WTC11 (cell line): ENCODE measurements at regions of chr11 and their contacts with region 1.

Region 1: GRCh38 chr11:12496171-12497025 is 119.0 kb downstream of the PARVA start:
- DNase-seq: no peak
- ATAC-seq: peak; percentile 34; the same call in 1 of the 2 replicates
- H3K4me3 Mint-ChIP-seq: no peak overlapping the region
- H3K27ac Mint-ChIP-seq: no peak overlapping the region
- H3K4me1 Mint-ChIP-seq: peaks cover 23% of the 10 kb centered on the region
- H3K27me3 Mint-ChIP-seq: peaks cover 28% of the 10 kb centered on the region
- CTCF ChIP-seq: no peak

Region 2: DNA sequence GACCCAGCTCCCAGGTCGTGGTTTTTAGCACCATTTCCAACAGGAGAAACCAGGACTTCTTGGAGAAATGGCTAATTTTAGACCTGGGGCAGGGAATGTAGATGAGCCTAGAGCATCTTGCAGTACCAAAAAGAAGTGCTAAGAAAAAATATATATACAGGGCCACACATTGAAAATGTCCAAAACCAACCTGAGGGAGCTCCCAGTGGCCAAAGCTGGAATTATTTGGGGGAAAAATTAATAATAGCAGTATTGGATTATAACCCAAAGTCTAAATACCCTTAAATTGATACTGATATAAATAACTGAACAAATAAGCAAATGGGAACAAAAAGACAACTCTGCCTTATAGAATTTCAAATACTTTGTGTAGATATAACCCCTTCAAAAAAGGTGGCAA is 11.1 kb before region 1 on chr11:
- CTCF ChIA-PET with region 1: interaction called, 25 read pairs
- POLR2A ChIA-PET with region 1: interaction called, 3 read pairs
- DNase-seq: no peak
- ATAC-seq: no peak
- H3K4me3 Mint-ChIP-seq: no peak overlapping the region
- H3K27ac Mint-ChIP-seq: no peak overlapping the region
- H3K4me1 Mint-ChIP-seq: no peaks in the 10 kb centered on the region
- H3K27me3 Mint-ChIP-seq: no peaks in the 10 kb centered on the region; the same call in 1 of the 2 replicates
- CTCF ChIP-seq: no peak

Region 3: GRCh38 chr11:12577725-12578644 is 81.6 kb after region 1 on chr11:
- CTCF ChIA-PET with region 1: no interaction called
- POLR2A ChIA-PET with region 1: no interaction called
- DNase-seq: no peak
- ATAC-seq: peak; percentile 87
- H3K4me3 Mint-ChIP-seq: no peak overlapping the region
- H3K27ac Mint-ChIP-seq: no peak overlapping the region
- H3K4me1 Mint-ChIP-seq: peaks cover 27% of the 10 kb centered on the region
- H3K27me3 Mint-ChIP-seq: peaks cover 5% of the 10 kb centered on the region
- CTCF ChIP-seq: no peak

Region 4: DNA sequence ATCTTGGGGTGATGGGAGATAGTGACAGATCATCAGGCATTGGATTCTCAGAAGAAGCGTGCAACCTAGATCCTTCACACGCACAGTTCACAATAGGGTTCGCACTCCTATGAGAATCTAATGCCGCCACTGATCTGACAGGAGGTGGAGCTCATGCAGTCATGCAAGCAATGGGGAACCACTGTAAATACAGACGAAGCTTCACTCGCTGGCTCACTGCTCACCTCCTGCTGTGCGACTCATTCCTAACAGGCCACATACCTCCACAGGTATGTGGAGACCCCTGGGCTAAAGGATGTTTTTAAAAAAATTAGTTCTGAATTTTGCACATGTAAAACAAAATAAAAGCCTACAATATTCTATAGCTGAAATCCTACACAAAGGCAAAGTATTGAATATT is 157.3 kb after region 1 on chr11:
- CTCF ChIA-PET with region 1: no interaction called
- POLR2A ChIA-PET with region 1: no interaction called
- DNase-seq: peak; percentile 45
- ATAC-seq: peak; percentile 73
- H3K4me3 Mint-ChIP-seq: no peak overlapping the region
- H3K27ac Mint-ChIP-seq: no peak overlapping the region
- H3K4me1 Mint-ChIP-seq: no peaks in the 10 kb centered on the region
- H3K27me3 Mint-ChIP-seq: no peaks in the 10 kb centered on the region
- CTCF ChIP-seq: no peak